Activated CD8-positive, alpha-beta memory T cell treated with anti-CD3 and anti-CD28 coated beads, Interleukin-2, amount 10 ng/mL, durations not matched to agents 7 days and 5 days (primary cell): ENCODE measurements at regions of chr12 and their contacts with region 1.

Region 1: GRCh38 chr12:12356886-12357718 is at the start of gene BORCS5:
- DNase-seq: peak; percentile 99
- ATAC-seq: peak; percentile 89
- H3K4me3 Mint-ChIP-seq: peak within 1 kb of the TSS; percentile 86
- H3K27ac Mint-ChIP-seq: peak within 1 kb of the TSS; percentile 94
- H3K4me1 Mint-ChIP-seq: peaks cover 47% of the 10 kb centered on the region
- H3K27me3 Mint-ChIP-seq: no peaks in the 10 kb centered on the region
- total RNA-seq, gene BORCS5: 35.5 to 38.3 TPM

Region 2: GRCh38 chr12:12138203-12139154 is 218.6 kb before region 1 on chr12:
- CTCF ChIA-PET with region 1: no interaction called
- DNase-seq: no peak
- ATAC-seq: no peak
- H3K4me3 Mint-ChIP-seq: no peak overlapping the region
- H3K27ac Mint-ChIP-seq: no peak overlapping the region
- H3K4me1 Mint-ChIP-seq: no peaks in the 10 kb centered on the region
- H3K27me3 Mint-ChIP-seq: peaks cover 64% of the 10 kb centered on the region

Region 3: GRCh38 chr12:12384571-12385340 is 27.7 kb after region 1 on chr12:
- CTCF ChIA-PET with region 1: interaction called, 12 read pairs
- DNase-seq: peak; percentile 96
- ATAC-seq: peak; percentile 88
- H3K4me3 Mint-ChIP-seq: peak overlapping the region; percentile 38
- H3K27ac Mint-ChIP-seq: peak overlapping the region; percentile 94
- H3K4me1 Mint-ChIP-seq: peaks cover 75% of the 10 kb centered on the region
- H3K27me3 Mint-ChIP-seq: no peaks in the 10 kb centered on the region

Region 4: GRCh38 chr12:12467264-12467663 is 110.2 kb after region 1 on chr12:
- CTCF ChIA-PET with region 1: no interaction called
- DNase-seq: no peak
- ATAC-seq: peak; percentile 31
- H3K4me3 Mint-ChIP-seq: no peak overlapping the region
- H3K27ac Mint-ChIP-seq: peak overlapping the region; percentile 81
- H3K4me1 Mint-ChIP-seq: peaks cover 82% of the 10 kb centered on the region
- H3K27me3 Mint-ChIP-seq: no peaks in the 10 kb centered on the region